GM18951 (cell line): ENCODE measurements at regions of chr10 and their contacts with region 1.

Region 1: GRCh38 chr10:125060826-125061556 is 99.4 kb downstream of the CTBP2 start:
- POLR2A ChIP-seq: no peak

Region 2: DNA sequence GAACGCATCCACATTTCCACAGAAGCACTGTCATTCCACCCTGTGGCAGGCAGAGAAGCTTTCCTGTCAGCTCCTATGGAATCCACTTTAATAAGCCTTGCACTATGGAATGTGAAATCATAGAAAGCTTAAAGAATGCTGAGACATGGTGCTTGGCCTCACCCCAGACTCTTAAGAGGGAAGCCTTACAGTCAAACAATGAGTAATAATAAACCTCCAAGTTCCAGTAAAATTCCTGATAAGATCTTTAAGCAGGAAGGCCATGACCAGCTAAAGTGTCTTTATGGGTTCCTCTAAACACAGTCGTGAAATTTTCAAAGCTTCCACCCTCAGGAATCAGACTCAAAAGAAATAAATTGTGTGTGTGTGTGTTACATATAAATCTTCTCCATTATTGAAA is 633.9 kb after region 1 on chr10:
- in situ Hi-C with region 1: loop called (anchors 25 kb)
- POLR2A ChIP-seq: no peak